ENCODE measurements at regions of chr1 and their contacts with region 1.

Region 1: DNA sequence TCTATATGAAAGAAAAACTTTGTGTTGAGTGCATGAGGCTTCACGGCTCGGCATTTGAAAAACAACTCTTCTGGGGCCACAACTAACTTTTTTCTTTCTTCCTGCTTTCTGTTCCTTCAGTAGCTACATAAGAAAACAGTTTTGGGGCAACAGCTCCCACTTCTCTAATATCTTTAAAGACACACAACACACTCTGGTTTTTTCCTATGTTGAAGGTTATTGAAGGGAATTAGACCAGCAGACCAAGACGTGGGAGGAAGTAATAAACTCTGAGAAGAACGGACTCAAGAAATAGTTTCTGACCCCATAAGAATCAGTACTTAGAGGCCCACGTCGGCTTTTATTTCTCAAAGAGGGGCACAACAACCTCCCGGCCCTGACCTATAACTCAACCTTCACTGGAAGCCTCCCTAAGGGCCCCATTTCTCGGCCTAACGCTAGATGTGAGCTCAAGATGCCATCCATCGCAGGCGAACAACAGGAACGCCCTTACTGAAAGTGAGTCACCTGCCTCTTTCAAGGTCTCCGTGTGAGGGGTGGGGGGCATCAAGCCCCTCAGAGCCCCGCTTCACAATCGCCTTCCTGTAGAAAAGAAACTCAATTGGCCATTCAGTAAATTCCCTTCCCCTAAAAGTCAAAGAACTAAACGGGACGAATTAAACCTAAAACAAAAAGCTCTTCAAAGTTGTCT is 844 bp downstream of the ZMYM6 start:
- DNase-seq: peak; percentile 21
- H3K4me3 Mint-ChIP-seq: peak overlapping the region; percentile 90
- H3K27ac Mint-ChIP-seq: peak overlapping the region; percentile 89
- H3K4me1 Mint-ChIP-seq: peaks cover 23% of the 10 kb centered on the region
- H3K27me3 Mint-ChIP-seq: peaks cover 1% of the 10 kb centered on the region

Region 2: DNA sequence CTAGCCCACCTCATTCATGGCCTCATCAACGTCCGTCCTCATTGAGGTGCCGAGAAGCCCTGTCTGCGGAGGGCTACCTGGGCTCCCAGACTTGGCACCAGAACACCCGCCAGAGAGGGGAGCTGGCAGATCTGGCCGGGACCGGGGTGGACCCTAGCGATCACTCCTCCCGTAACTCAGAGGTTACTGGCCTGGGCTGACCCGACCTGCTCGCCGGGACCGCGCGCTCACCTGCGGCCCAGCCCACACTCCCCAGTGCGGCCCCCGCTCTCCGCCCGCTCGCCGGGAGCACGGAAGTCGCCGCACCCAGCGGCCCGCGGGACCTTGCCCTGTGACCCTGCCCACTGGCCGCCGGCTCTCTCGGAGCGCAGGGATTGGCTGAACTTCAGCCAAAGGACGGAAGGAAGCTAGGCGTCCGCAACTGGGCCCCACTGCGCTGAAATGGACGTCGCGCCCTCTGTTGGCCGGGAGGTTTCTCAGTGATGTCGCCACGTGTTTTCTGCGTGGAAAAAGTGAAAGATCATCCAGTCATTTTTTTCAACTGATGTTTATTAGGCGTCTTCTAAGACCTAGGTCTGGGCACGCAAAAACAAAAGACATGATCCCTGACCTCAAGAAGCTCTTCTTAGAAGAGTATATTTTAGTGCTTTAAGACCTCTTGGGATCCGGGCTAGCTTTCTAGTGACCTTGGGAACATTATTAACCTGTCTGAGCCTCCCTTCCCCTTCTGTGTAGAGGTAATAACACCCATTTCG is 171.3 kb before region 1 on chr1 and contains the start of gene SMIM12:
- intact Hi-C with region 1: loop called (anchors 1 kb)
- DNase-seq: peak; percentile 86
- H3K4me3 Mint-ChIP-seq: peak within 1 kb of the TSS; percentile 98
- H3K27ac Mint-ChIP-seq: peak within 1 kb of the TSS; percentile 97
- H3K4me1 Mint-ChIP-seq: peaks cover 46% of the 10 kb centered on the region
- H3K27me3 Mint-ChIP-seq: no peaks in the 10 kb centered on the region
- total RNA-seq, gene SMIM12: 58.7 and 59.3 TPM in 2 replicates

Region 3: DNA sequence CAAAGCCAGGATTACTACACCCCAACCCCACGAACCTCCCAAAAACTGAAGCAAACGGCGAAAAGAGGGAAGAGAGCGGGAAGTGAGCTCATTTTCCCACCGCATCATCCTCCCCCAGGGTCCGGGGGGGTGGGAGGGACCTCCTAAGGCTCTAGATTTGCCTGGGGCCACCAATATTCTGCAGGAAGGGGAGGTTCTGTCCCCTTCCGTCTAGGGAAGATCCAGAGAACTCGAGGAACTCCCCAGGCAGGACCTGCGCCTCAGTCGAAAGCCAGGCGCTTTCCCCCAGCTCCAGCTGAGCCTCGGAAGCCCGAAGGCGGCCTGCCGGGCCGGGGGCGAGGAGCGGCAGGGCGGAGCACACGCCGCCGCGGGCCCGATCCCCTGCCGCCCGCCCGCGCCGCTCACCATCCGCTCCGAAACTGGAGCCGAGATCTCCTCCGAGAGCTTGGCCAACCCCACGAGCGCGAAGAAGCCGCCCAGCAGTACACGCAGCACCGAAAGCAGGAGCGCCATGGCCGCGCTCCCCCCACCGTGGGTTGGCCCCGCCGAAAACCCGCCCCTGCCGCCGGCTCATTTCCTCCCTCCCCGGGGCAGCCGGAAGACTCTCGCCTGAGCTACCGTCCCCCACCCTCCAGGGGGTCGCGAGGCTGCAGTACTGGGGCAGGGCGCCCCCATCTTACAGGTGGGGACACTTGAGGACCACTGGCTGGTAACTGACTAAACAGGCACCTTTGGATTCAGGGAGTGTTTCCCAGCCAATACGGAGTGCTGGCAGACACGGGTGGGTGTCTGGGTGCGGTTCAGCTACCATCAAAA is 45.9 kb before region 1 on chr1 and contains the start of gene TMEM35B:
- intact Hi-C with region 1: loop called (anchors 5 kb)
- DNase-seq: peak; percentile 72
- H3K4me3 Mint-ChIP-seq: peak within 1 kb of the TSS; percentile 94
- H3K27ac Mint-ChIP-seq: peak within 1 kb of the TSS; percentile 88
- H3K4me1 Mint-ChIP-seq: peaks cover 36% of the 10 kb centered on the region
- H3K27me3 Mint-ChIP-seq: no peaks in the 10 kb centered on the region
- total RNA-seq, gene TMEM35B: 15.0 and 19.3 TPM in 2 replicates

Region 4: DNA sequence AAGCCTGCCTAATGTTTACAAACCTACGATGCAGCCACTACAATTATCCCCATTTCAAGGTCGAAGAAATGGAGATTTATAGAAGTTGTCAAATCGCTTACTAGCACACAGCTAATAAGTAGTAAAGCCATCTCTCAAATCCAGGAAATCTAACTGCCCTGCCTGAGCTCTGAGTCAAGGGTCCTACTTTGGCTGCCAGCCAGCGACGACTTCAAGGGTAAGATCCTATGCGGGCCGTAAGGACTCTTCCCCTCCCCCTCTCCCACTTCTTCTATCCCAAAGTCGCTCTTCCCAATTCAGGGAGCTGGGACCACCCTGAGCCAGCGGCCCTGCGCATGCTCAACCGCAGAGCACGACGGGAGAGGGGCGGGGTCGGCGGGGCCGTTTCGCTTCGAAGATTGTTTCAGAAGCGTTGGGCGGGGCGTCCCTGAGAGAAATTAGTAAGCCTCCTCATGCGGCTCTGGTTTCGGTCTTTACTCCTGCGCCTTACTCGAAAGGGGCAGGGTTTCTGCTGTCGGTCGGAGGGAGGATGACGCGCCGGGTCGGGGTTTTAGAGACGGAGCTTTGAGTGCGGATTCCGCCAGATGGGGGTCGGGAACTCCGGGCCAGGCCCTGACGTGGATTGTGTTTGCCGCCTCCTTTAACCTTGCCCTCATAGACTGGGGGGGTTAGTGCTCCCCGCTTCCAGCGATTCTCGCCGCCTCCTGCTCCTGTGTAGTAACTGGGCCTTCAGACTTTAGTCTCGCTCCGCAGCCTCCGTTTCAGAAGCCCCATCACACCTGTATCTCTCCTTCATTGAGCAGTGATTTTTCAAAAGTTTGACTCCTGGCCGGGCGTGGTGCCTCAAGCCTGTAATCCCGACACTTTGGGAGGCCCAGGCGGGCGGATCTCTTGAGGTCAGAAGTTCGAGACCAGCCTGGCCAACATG is 48.4 kb after region 1 on chr1 and contains the start of gene ZMYM1:
- intact Hi-C with region 1: loop called (anchors 1 kb)
- DNase-seq: peak; percentile 81
- H3K4me3 Mint-ChIP-seq: peak within 1 kb of the TSS; percentile 91
- H3K27ac Mint-ChIP-seq: peak within 1 kb of the TSS; percentile 99
- H3K4me1 Mint-ChIP-seq: peaks cover 32% of the 10 kb centered on the region
- H3K27me3 Mint-ChIP-seq: no peaks in the 10 kb centered on the region
- total RNA-seq, gene ZMYM1: 2.4 and 2.7 TPM in 2 replicates

Region 5: DNA sequence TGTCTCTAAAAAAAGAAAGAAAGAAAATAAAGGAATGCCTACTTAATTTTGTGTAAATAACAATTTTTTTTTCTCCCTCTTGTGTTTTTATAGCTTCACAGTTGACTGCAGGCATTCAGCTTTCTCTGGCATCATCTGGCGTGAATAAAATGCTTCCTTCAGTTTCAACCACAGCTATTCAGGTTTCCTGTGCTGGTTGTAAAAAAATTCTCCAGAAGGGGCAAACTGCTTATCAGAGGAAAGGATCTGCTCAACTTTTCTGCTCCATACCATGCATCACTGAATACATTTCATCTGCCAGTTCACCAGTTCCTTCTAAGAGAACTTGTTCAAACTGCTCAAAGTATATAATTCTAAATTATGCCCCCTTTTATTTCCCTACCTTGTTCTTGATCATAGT is 66.3 kb after region 1 on chr1:
- intact Hi-C with region 1: loop called (anchors 5 kb)
- DNase-seq: no peak
- H3K4me3 Mint-ChIP-seq: no peak overlapping the region
- H3K27ac Mint-ChIP-seq: peak overlapping the region; percentile 31
- H3K4me1 Mint-ChIP-seq: peaks cover 6% of the 10 kb centered on the region
- H3K27me3 Mint-ChIP-seq: no peaks in the 10 kb centered on the region

Region 6: GRCh38 chr1:35268282-35269200 is 237.6 kb after region 1 on chr1 and contains the start of gene ZMYM4:
- intact Hi-C with region 1: loop called (anchors 10 kb)
- DNase-seq: peak; percentile 87
- H3K4me3 Mint-ChIP-seq: peak within 1 kb of the TSS; percentile 81
- H3K27ac Mint-ChIP-seq: peak within 1 kb of the TSS; percentile 80
- H3K4me1 Mint-ChIP-seq: peaks cover 28% of the 10 kb centered on the region
- H3K27me3 Mint-ChIP-seq: peaks cover 7% of the 10 kb centered on the region
- total RNA-seq, gene ZMYM4: 31.9 and 35.1 TPM in 2 replicates

Measured in activated T-helper 2 cell treated with anti-CD3 and anti-CD28 coated beads, Interferon-gamma antibody, Interleukin-2, Interleukin-4, amounts not matched to agents 10 μg/mL and 5 μg/mL and 100 μg/mL, durations not matched to agents 14 hours and 24 hours and 36 hours (primary cell).